ENCODE measurements at regions of chr10 and their contacts with region 1.

Region 1: DNA sequence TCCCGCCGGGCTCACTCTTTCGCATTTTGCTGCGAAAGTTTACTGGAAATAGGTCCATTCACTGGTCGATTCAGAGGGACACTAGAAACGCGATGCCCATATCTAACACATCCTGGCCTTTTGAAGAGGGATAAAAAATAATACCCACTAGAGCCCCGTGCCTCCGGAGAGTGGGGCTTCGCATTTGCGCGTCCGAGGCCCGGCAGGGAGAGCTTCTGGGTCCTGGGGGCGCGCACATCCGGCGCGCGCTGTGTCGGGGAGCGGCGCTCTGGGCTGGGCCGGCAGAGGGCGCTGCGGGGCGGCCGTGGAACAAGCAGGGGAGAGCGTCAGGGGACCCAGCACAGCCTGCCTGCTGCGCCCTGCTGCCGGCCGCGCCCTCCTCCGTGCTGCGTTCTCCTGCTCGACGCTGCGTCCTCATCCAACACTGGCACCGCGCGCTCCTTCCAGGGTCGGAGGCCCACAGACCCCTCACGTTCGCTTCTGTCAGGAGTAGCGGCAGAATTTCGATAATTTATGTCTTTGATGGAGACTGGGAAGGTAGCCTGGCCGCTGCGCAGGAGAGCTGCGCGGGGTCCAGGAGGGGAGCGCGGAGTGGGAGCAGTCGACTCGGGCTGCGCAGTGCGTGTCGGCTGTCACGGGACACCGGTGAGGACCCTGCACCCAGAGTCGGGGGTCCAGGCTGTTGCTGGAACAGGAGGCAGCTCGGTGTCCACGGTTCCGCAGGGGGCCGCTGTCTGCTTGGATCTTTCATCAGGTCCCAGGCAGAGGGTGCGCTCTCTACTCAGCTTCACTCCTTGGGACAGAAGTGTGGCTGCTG is 41.5 kb upstream of the ZNF32 start:
- DNase-seq: no peak
- H3K4me3 ChIP-seq: peak overlapping the region; percentile 54 to 57
- H3K27ac ChIP-seq: peak overlapping the region; percentile 84
- H3K4me1 ChIP-seq: peaks cover 40% of the 10 kb centered on the region
- H3K27me3 ChIP-seq: no peaks in the 10 kb centered on the region
- CTCF ChIP-seq: peak; percentile 71 to 97 (median 77)
- POLR2A ChIP-seq: no peak

Region 2: GRCh38 chr10:43793704-43794103 is 103.5 kb after region 1 on chr10:
- intact Hi-C with region 1: loop called (anchors 5 kb)
- DNase-seq: no peak
- H3K4me3 ChIP-seq: no peak overlapping the region
- H3K27ac ChIP-seq: no peak overlapping the region
- H3K4me1 ChIP-seq: no peaks in the 10 kb centered on the region
- H3K27me3 ChIP-seq: no peaks in the 10 kb centered on the region
- CTCF ChIP-seq: no peak
- POLR2A ChIP-seq: no peak

Region 3: DNA sequence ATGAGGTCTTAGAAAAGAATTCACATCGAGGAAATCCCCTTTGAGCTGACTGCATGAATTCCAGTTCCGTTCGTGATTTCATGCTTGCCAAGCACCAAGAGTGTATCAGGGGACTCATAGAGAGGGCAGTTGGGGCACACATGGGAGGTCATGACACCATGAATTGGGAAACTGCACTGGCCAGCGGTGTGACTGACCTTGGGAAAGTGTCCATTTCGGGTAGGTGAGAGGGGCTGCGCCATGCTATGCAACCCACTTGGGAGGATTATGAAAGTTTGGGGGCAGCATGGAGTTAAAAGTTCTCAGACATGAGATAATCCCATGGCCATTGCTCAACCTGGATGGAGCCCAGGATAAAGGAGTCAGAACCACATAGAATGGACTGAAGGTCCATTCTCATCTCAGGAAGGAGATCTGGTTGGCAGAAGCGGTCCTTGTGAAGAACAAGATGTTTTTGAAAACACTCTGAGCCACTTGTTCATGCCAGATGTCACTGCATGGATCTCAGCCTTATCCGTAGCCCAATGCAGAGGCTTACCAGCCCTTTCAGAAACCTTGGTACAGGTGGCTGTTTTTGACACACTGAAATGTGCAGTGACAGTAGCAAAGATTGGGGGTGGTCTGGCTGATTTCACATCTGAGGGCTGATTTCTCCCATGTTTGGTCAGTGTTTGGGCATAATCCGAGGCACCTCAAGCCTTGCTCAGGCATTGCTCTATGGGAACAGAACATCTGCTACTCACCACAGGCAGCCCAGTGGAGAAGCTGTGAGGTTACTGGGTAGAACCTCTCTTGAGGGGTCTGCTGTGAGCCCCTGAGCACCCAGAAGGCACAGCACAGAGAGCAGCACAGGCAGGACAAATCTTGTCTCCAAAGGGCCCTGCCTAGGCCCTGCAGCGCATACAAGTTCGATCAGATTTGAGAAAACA is 442.5 kb after region 1 on chr10:
- intact Hi-C with region 1: loop called (anchors 5 kb)
- DNase-seq: no peak
- H3K4me3 ChIP-seq: no peak overlapping the region
- H3K27ac ChIP-seq: no peak overlapping the region
- H3K4me1 ChIP-seq: no peaks in the 10 kb centered on the region
- H3K27me3 ChIP-seq: no peaks in the 10 kb centered on the region
- CTCF ChIP-seq: no peak
- POLR2A ChIP-seq: no peak